Activated CD4-positive, alpha-beta T cell treated with anti-CD3 and anti-CD28 coated beads for 36 hours (primary cell): ENCODE measurements at regions of chr1 and their contacts with region 1.

Region 1: GRCh38 chr1:15918962-15919715 is 56.8 kb downstream of the ZBTB17 start:
- DNase-seq: peak; percentile 87
- ATAC-seq: peak; percentile 96
- H3K4me3 Mint-ChIP-seq: peak overlapping the region; percentile 17
- H3K27ac Mint-ChIP-seq: no peak overlapping the region
- H3K4me1 Mint-ChIP-seq: peaks cover 35% of the 10 kb centered on the region
- H3K27me3 Mint-ChIP-seq: no peaks in the 10 kb centered on the region

Region 2: DNA sequence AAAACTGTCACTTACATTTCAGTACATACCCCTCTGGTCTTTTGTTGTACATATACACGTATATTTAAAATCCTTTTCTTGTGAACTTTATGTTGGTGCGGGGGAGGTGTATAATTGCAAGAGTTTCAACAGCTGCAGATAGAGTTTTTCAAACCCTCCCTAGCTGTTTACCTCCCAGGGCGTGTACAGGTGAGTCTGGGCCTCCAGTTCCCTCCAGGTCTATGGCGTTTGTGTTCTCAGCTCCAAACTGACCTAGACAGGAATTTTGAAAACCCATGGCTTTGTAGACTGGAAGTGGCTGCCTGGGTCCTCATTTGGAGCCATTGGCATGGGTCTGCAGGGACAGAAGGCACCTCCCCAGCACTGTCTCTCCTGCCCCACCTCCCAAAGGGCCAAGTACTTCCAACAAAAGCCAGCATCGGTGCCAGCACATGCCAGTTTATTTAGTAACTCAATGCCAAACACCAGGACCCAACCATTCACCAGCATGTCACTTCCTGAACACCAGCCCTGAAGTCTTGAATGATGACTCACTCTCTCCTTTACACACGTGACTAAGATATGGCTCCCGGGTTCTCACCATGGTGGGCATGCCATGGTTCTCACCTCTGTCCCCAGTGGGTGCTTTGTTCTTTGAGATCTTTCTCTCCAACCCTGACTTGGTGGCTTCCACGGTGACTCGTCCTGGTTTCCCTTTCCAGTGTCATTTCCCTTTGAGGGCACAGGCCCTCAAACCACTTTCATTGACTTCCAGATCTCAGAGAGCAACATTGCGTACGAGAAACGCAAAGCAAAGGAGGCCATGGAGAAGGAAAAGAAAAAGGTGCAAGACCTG is 566.8 kb before region 1 on chr1:
- CTCF ChIA-PET with region 1: no interaction called
- POLR2A ChIA-PET with region 1: no interaction called
- intact Hi-C with region 1: loop called in 1 of 2 experiments (anchors 5 kb)
- DNase-seq: peak; percentile 71
- ATAC-seq: peak; percentile 90
- H3K4me3 Mint-ChIP-seq: no peak overlapping the region
- H3K27ac Mint-ChIP-seq: peak overlapping the region; percentile 61
- H3K4me1 Mint-ChIP-seq: peaks cover 39% of the 10 kb centered on the region
- H3K27me3 Mint-ChIP-seq: peaks cover 8% of the 10 kb centered on the region

Region 3: GRCh38 chr1:15820478-15820877 is 98.7 kb before region 1 on chr1:
- CTCF ChIA-PET with region 1: interaction called, 4 read pairs
- POLR2A ChIA-PET with region 1: no interaction called
- intact Hi-C with region 1: loop called (anchors 5 kb)
- DNase-seq: no peak
- ATAC-seq: no peak
- H3K4me3 Mint-ChIP-seq: no peak overlapping the region
- H3K27ac Mint-ChIP-seq: no peak overlapping the region
- H3K4me1 Mint-ChIP-seq: peaks cover 6% of the 10 kb centered on the region
- H3K27me3 Mint-ChIP-seq: no peaks in the 10 kb centered on the region

Region 4: GRCh38 chr1:15949453-15950245 is 30.5 kb after region 1 on chr1:
- CTCF ChIA-PET with region 1: interaction called, 6 read pairs
- POLR2A ChIA-PET with region 1: no interaction called
- intact Hi-C with region 1: loop called (anchors 1 kb)
- DNase-seq: peak; percentile 94
- ATAC-seq: peak; percentile 75
- H3K4me3 Mint-ChIP-seq: peak overlapping the region; percentile 61
- H3K27ac Mint-ChIP-seq: peak overlapping the region; percentile 95
- H3K4me1 Mint-ChIP-seq: peaks cover 74% of the 10 kb centered on the region
- H3K27me3 Mint-ChIP-seq: no peaks in the 10 kb centered on the region

Region 5: DNA sequence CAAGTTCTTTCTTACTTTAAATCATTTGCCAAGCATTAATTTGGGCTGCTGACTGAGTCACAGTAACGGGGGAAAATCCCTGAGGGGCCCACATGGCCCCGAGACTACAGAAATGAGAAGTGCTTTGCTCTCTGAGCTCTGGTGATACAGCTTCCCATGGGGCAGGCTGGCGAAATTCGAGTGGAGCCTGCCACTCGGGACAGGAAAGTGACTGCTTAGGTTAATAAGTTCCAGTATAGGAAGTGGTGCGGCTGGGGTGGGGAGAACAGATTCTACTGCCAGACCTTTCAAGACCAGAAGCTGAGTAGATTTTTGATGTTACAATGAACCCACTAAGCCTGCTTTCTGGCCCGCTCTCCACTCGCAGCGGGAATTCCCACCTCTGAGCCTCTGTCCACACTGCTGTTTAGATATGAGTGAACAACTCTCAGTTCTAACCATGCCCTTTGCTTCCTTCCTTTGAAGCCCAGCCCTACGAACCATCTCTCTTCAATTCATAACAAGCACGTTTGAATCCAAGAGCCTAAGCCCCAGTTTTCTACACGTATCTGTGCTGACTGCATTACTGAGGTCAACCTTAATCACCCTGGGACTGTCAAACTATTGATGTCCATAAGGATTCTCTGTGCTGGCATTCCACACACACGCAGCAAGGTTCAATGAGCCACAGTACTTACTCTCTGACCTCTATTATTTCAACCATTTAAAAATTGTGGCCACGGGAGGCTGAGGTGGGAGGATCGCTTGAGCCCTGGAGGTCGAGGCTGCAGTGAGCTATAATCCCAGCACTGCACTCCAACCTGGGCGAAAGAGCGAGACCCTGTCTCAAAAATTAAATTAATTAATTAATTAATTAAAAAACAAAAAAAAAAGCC is 47.2 kb after region 1 on chr1:
- CTCF ChIA-PET with region 1: no interaction called
- POLR2A ChIA-PET with region 1: interaction called, 5 read pairs
- intact Hi-C with region 1: loop called (anchors 1 kb)
- DNase-seq: peak; percentile 93
- ATAC-seq: peak; percentile 79
- H3K4me3 Mint-ChIP-seq: peak overlapping the region; percentile 54
- H3K27ac Mint-ChIP-seq: peak overlapping the region; percentile 98
- H3K4me1 Mint-ChIP-seq: peaks cover 83% of the 10 kb centered on the region
- H3K27me3 Mint-ChIP-seq: no peaks in the 10 kb centered on the region